ENCODE measurements at regions of chr3 and their contacts with region 1.

Region 1: DNA sequence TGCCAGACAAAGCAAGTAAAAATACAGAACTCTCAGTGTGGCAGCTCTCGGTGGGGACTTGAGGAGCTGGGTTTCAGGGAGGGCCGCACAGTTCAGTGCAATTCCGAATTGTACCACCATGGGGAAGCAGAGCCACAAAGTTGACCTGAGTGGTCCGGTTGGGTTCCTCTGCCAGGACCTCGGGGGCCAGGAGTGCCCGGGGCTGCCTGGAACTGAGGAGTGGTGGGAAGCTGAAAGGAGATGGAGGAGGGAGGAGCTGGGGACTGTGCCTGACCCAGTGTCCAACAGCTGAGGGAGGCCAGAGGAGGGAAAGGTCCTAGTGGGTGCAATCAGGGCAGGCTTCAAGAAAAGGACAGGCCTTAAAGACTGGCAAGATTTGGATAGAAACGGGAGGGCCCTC is 32.2 kb upstream of the TRH start:
- DNase-seq: peak; percentile 90
- H3K4me3 Mint-ChIP-seq: no peak overlapping the region
- H3K27ac Mint-ChIP-seq: no peak overlapping the region
- H3K4me1 Mint-ChIP-seq: peaks cover 8% of the 10 kb centered on the region
- H3K27me3 Mint-ChIP-seq: peaks cover 36% of the 10 kb centered on the region
- CTCF ChIP-seq: peak; percentile 93

Region 2: GRCh38 chr3:129992781-129993180 is 50.5 kb after region 1 on chr3:
- CTCF ChIA-PET with region 1: interaction called, 13 read pairs
- intact Hi-C with region 1: no loop called
- DNase-seq: peak; percentile 32
- H3K4me3 Mint-ChIP-seq: no peak overlapping the region
- H3K27ac Mint-ChIP-seq: no peak overlapping the region
- H3K4me1 Mint-ChIP-seq: no peaks in the 10 kb centered on the region
- H3K27me3 Mint-ChIP-seq: peaks cover 93% of the 10 kb centered on the region
- CTCF ChIP-seq: peak; percentile 59

Region 3: DNA sequence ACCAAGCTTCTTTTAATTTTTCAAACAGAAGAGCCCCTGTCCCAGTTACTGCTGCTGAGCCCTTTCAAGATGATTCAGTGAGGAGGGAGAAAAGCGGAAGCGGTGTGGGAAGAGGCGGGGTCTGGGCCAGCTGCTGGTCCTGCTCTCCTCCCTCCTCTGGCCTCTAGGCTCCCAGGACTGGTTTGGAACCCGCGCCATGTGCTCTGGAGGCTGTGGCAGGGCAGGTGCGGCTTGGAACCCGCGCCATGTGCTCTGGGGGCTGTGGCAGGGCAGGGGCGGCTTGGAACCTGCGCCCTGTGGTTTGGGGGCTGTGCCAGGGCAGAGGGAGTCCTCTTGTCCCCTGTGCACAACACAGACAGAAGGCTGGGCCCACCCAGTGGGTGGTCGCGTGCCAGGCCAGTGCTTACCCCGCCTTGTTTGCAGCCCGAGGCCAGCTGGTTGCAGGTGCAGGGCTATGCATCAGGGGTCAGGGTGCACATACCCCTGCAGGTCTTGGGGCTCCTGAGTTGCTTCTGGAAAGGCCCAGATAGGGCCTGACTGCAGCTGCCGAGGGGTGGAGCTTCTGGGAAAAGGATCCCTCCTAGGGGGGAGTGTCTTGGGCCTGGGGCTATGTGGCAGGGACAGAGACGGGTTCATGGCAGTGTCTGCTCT is 151.6 kb after region 1 on chr3:
- CTCF ChIA-PET with region 1: interaction called, 40 read pairs
- intact Hi-C with region 1: loop called (anchors 1 kb)
- DNase-seq: peak; percentile 35
- H3K4me3 Mint-ChIP-seq: peak overlapping the region; percentile 57
- H3K27ac Mint-ChIP-seq: peak overlapping the region; percentile 38
- H3K4me1 Mint-ChIP-seq: peaks cover 22% of the 10 kb centered on the region
- H3K27me3 Mint-ChIP-seq: no peaks in the 10 kb centered on the region
- CTCF ChIP-seq: no peak

Region 4: DNA sequence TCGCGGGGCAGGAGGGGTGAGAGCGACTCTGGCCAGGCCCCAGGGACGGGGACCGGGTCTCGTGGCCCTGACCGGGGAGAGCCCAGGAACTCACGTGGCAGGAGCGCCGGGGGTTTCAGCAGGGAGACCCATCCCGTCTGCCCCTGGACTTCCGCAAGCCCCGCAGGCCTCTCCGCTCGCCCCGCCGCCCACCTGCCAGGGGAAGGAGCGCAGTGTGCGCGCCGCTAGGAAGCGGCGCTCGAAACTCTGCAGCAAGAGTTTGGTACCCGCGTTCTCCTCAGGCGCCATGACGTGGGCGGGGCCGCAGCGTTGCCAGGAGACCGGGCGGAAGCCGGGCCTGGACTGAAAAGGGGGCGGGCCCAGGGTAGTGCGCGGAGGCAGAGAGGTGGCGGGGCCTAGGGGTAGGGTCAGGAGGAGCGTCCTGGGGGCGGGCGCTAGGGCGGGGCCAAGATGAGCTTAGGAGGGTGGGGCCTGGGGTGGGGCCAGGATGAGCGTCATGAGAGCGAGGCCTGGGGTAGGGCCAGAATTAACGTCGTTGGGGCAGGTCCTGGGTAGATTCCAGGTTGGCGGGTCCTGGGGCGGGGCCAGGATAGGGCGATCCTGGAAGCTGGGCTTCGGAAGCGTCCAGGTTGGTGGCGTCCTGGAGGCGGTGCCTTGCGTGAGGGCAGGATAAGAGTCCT is 169.0 kb after region 1 on chr3:
- CTCF ChIA-PET with region 1: interaction called, 20 read pairs
- intact Hi-C with region 1: no loop called
- DNase-seq: peak; percentile 100
- H3K4me3 Mint-ChIP-seq: peak overlapping the region; percentile 93
- H3K27ac Mint-ChIP-seq: peak overlapping the region; percentile 79
- H3K4me1 Mint-ChIP-seq: peaks cover 27% of the 10 kb centered on the region
- H3K27me3 Mint-ChIP-seq: no peaks in the 10 kb centered on the region
- CTCF ChIP-seq: no peak

Region 5: GRCh38 chr3:130242850-130243569 is 300.7 kb after region 1 on chr3:
- CTCF ChIA-PET with region 1: no interaction called
- intact Hi-C with region 1: loop called (anchors 5 kb)
- DNase-seq: peak; percentile 38
- H3K4me3 Mint-ChIP-seq: no peak overlapping the region
- H3K27ac Mint-ChIP-seq: no peak overlapping the region
- H3K4me1 Mint-ChIP-seq: no peaks in the 10 kb centered on the region
- H3K27me3 Mint-ChIP-seq: peaks cover 10% of the 10 kb centered on the region
- CTCF ChIP-seq: no peak

Region 6: DNA sequence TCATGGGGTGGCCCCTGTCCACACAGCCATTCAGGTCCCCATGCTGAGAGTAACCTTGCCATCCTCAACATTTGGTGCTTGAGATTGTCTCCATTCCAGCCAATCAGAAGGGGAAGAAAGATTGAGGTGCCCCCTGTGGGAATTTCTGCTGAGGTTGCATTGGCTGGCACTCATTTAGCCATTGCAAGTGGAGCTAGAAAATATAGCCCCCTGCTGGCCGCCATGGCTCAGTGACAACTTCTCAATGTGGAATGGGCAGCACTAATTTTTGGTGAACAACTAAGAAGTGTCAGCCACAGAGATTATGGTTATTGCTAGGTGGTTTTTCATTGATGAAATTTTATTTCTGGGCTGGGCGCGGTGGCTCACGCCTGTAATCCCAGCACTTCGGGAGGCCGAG is 596.7 kb after region 1 on chr3:
- CTCF ChIA-PET with region 1: no interaction called
- intact Hi-C with region 1: loop called (anchors 5 kb)
- DNase-seq: peak; percentile 83
- H3K4me3 Mint-ChIP-seq: no peak overlapping the region
- H3K27ac Mint-ChIP-seq: no peak overlapping the region
- H3K4me1 Mint-ChIP-seq: no peaks in the 10 kb centered on the region
- H3K27me3 Mint-ChIP-seq: peaks cover 44% of the 10 kb centered on the region
- CTCF ChIP-seq: peak; percentile 95

Region 7: GRCh38 chr3:131242201-131242600 is 1299.9 kb after region 1 on chr3:
- CTCF ChIA-PET with region 1: no interaction called
- intact Hi-C with region 1: no loop called
- DNase-seq: no peak
- H3K4me3 Mint-ChIP-seq: no peak overlapping the region
- H3K27ac Mint-ChIP-seq: no peak overlapping the region
- H3K4me1 Mint-ChIP-seq: no peaks in the 10 kb centered on the region
- H3K27me3 Mint-ChIP-seq: no peaks in the 10 kb centered on the region
- CTCF ChIP-seq: no peak